ENCODE measurements at regions of chr5 and their contacts with region 1.

Region 1: DNA sequence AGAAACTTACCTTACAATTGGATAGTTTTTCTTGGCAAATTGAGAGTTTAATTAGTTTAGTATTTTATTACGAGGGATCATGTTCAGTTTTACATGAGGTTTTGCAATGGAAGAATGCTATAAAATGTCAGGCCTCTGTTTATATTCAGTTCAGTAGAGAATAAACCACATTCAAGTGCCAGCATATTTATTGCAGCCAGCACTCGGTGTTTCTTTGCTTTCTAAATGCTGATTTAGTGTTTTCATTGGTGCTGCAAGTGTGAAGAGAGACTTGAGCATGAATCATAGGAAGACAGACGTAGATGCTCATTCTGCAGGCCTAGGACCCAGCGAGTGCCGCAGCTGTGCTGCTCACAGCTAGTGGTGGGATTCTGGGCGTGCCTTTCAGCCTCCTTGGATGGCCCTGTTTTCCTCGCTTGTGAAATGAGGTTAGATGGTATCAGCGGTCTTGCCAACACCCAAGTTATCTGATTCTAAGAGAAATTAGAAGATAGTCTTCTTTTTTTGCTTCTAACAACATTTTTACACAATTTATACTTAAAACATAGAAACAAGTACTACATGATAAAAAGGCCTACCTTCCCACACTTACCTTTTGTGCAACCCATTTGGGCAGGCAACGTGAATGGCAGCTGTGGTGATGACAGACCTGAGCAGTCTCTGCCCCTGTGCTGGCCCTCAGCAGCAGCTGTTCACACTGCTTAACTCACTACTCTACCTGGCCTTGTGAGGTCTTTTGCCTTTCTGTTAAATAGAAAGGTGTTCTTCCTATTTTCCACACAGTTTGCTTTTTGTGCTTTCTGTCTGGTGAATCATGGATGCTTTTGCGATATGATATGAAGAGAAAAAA is 26.8 kb upstream of the TNFAIP8 start:
- DNase-seq: peak in 8 of 9 experiments; percentile 34 to 88 (median 74)
- ATAC-seq: peak; percentile 70
- H3K4me3 ChIP-seq: no peak overlapping the region
- H3K4me3 Mint-ChIP-seq: peak overlapping the region; percentile 47
- H3K27ac ChIP-seq: peak overlapping the region; percentile 39 to 80
- H3K27ac Mint-ChIP-seq: peak overlapping the region; percentile 95
- H3K4me1 ChIP-seq: peaks cover 95% of the 10 kb centered on the region
- H3K4me1 Mint-ChIP-seq: peaks cover 94% of the 10 kb centered on the region
- H3K27me3 ChIP-seq: no peaks in the 10 kb centered on the region
- H3K27me3 Mint-ChIP-seq: no peaks in the 10 kb centered on the region
- CTCF ChIP-seq: no peak

Region 2: GRCh38 chr5:119179857-119180641 is 148.9 kb before region 1 on chr5:
- CTCF ChIA-PET with region 1: no interaction called
- POLR2A ChIA-PET with region 1: no interaction called
- intact Hi-C with region 1: no loop called
- DNase-seq: no peak
- ATAC-seq: no peak
- H3K4me3 ChIP-seq: no peak overlapping the region
- H3K4me3 Mint-ChIP-seq: no peak overlapping the region
- H3K27ac ChIP-seq: no peak overlapping the region
- H3K27ac Mint-ChIP-seq: no peak overlapping the region
- H3K4me1 ChIP-seq: no peaks in the 10 kb centered on the region
- H3K4me1 Mint-ChIP-seq: peaks cover 1% of the 10 kb centered on the region
- H3K27me3 ChIP-seq: no peaks in the 10 kb centered on the region
- H3K27me3 Mint-ChIP-seq: no peaks in the 10 kb centered on the region
- CTCF ChIP-seq: no peak

Region 3: DNA sequence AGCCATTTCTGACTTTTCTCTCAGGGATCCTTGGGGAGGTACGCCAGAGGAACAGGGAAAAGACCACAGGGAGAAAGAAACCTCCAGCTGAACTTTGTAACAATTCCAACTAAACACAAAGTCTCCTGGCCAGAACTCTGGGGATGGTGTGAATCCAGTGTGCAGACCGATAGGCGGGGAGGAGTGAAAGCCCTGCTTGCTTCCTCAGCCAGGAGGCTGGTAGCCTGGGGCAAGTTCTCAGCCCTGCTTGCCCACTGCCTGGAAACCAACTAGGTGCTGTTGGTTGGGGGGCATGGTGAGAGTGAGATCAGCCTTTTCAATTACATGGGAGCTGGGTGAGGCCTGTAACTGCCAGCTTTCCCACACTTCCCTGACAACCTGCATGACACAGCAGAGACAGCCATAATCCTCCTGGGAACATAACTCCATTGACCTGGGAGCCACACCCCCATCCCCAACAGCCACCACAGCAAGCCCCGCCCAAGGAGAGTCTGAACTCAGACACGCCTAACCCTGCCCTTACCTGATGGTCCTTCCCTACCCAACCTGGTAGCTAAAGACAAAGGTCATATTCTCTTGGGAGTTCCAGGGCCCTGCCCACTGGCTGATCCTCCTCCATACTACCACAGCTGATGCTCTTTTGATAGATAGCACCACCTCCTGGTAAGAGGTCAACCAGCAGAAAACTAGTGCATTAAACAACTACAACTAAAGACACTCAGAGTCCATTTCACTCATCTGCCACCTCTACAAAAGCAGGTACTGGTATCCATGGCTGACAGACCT is 73.2 kb before region 1 on chr5:
- CTCF ChIA-PET with region 1: no interaction called
- POLR2A ChIA-PET with region 1: no interaction called
- intact Hi-C with region 1: no loop called
- DNase-seq: peak in 2 of 9 experiments; percentile 29 to 46
- ATAC-seq: no peak
- H3K4me3 ChIP-seq: no peak overlapping the region
- H3K4me3 Mint-ChIP-seq: no peak overlapping the region
- H3K27ac ChIP-seq: no peak overlapping the region
- H3K27ac Mint-ChIP-seq: no peak overlapping the region
- H3K4me1 ChIP-seq: no peaks in the 10 kb centered on the region
- H3K4me1 Mint-ChIP-seq: no peaks in the 10 kb centered on the region
- H3K27me3 ChIP-seq: no peaks in the 10 kb centered on the region
- H3K27me3 Mint-ChIP-seq: no peaks in the 10 kb centered on the region
- CTCF ChIP-seq: no peak

Region 4: DNA sequence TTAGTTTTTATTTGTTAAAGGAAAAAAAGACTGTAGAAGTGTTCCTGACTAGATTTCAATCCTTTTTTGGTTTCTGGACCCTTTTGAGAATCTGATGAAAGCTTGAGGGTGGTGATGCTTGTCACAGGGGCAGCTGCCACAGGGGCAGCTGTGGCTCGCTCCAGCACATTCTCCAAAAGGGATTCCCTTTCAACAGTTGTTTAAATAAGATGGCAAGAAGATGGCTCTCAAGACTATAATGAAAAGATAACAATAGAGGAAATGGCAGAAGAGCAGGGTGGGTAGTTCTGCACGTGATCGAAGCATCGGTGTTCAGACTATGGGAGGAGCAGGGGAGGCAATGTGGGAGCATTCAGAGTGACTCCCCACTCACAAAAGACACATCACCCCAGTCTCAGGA is 19.7 kb before region 1 on chr5:
- CTCF ChIA-PET with region 1: interaction called, 5 read pairs
- POLR2A ChIA-PET with region 1: interaction called, 32 read pairs
- intact Hi-C with region 1: loop called (anchors 1 to 2 kb)
- DNase-seq: peak in 1 of 9 experiments; percentile 57
- ATAC-seq: peak; percentile 25
- H3K4me3 ChIP-seq: no peak overlapping the region
- H3K4me3 Mint-ChIP-seq: peak overlapping the region; percentile 78
- H3K27ac ChIP-seq: peak overlapping the region; percentile 30 to 67
- H3K27ac Mint-ChIP-seq: peak overlapping the region; percentile 99
- H3K4me1 ChIP-seq: peaks cover 97% of the 10 kb centered on the region
- H3K4me1 Mint-ChIP-seq: peaks cover 96% of the 10 kb centered on the region
- H3K27me3 ChIP-seq: no peaks in the 10 kb centered on the region
- H3K27me3 Mint-ChIP-seq: no peaks in the 10 kb centered on the region
- CTCF ChIP-seq: no peak

Region 5: DNA sequence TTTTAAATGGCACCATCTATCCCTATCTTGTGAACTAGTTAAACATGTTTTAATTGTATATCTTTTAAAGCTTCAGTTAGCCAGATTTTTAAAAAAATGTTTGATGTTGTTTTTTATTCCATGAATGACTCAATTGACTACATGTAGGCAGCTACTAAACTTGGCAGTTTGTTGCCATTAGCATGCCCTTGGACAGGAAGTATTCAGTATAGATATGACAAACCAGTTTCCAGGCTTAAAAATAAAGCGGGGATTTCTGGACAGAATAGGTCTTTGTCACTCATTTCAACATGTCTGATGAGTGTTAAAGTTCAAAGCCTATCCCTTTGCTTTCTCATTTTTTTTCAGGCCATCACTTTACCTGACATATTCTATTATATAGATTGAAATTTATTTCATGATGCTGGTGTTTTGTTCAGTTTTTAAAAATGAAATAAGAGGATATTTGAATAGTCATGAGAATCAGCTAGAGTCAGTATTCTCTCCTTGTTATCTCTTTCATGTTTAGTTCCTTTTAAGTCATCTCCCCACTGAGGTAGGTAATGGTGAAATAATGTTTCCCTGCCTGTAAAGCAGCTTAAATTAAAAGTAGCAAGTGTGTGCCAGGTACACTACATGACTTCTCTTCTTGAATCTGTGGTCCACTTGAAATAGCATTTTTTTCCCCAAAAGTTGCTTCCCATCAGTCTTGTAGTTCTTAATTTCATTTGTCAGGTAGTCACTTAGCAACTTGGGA is 38.7 kb after region 1 on chr5:
- CTCF ChIA-PET with region 1: no interaction called
- POLR2A ChIA-PET with region 1: interaction called, 3 read pairs
- intact Hi-C with region 1: loop called in 1 of 2 experiments (anchors 5 kb)
- DNase-seq: peak in 2 of 9 experiments; percentile 40 to 63
- ATAC-seq: peak; percentile 55
- H3K4me3 ChIP-seq: no peak overlapping the region
- H3K4me3 Mint-ChIP-seq: peak overlapping the region; percentile 50
- H3K27ac ChIP-seq: peak overlapping the region in 1 of 2 experiments; percentile 43
- H3K27ac Mint-ChIP-seq: peak overlapping the region; percentile 92
- H3K4me1 ChIP-seq: peaks cover 63% of the 10 kb centered on the region
- H3K4me1 Mint-ChIP-seq: peaks cover 85% of the 10 kb centered on the region
- H3K27me3 ChIP-seq: no peaks in the 10 kb centered on the region
- H3K27me3 Mint-ChIP-seq: no peaks in the 10 kb centered on the region
- CTCF ChIP-seq: no peak

Region 6: GRCh38 chr5:119452373-119453039 is 123.5 kb after region 1 on chr5 and contains the start of gene HSD17B4:
- CTCF ChIA-PET with region 1: no interaction called
- POLR2A ChIA-PET with region 1: no interaction called
- intact Hi-C with region 1: loop called in 1 of 2 experiments (anchors 5 kb)
- DNase-seq: peak; percentile 52 to 87 (median 81)
- ATAC-seq: peak; percentile 95
- H3K4me3 ChIP-seq: peak within 1 kb of the TSS; percentile 81 to 87
- H3K4me3 Mint-ChIP-seq: peak within 1 kb of the TSS; percentile 92
- H3K27ac ChIP-seq: peak within 1 kb of the TSS; percentile 66 to 73
- H3K27ac Mint-ChIP-seq: peak within 1 kb of the TSS; percentile 88
- H3K4me1 ChIP-seq: peaks cover 16% of the 10 kb centered on the region
- H3K4me1 Mint-ChIP-seq: peaks cover 21% of the 10 kb centered on the region
- H3K27me3 ChIP-seq: no peaks in the 10 kb centered on the region
- H3K27me3 Mint-ChIP-seq: no peaks in the 10 kb centered on the region
- CTCF ChIP-seq: no peak
- total RNA-seq, gene HSD17B4: 7.4 to 8.6 TPM

Measured in CD8-positive, alpha-beta T cell (primary cell).